ENCODE measurements at regions of chr7 and their contacts with region 1.

Region 1: GRCh38 chr7:44196450-44196872 is 4.3 kb upstream of the YKT6 start:
- DNase-seq: no peak
- H3K4me3 ChIP-seq: no peak overlapping the region
- H3K27ac ChIP-seq: no peak overlapping the region
- H3K4me1 ChIP-seq: peaks cover 1 to 5% (median 2%) of the 10 kb centered on the region in 4 donors
- H3K27me3 ChIP-seq: peaks cover 0 to 30% (median 0%) of the 10 kb centered on the region in 4 donors
- CTCF ChIP-seq: peak; percentile 52 to 66 (median 59)
- EP300 ChIP-seq: no peak
- POLR2A ChIP-seq: no peak

Region 2: DNA sequence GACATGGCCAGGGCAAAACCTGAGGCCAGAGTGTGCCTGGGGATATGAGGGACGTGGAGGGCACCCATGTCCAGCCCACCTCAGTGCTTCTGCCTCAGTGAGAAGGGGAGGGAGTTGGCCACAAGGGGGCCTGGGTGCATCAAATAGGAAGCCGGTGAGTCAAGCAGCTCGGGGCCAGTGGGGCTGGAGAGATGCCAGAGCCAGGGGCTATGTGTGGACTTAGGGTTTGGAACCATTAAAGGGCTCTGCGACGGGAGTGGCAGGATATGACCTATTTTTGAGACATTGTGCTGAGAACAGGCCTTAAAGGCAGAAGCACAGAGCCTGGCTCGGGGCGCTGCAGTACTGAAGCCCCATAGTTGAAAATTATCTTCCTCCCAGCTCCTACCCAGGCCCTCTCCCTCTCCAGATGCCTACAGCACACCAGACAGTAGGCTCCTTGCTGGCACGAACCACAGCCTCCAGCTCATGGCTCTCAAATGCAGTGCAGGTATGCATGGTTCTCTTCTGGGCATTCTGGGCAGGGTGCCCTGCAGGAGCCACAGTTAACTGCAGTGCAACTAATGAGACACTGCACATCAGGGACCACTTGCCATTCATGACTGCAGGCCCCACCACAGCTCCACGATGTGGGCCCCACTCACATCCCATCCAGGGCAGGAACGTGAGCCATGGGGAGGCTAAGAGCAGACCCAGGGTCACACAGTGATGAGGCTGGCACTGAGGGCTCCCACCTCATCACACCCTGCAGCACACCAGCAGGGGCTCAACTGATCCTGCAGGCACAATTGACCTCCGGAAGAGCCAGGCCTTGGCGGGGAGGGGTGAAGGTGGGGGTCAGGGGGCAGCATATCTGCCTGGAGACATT is 123.9 kb before region 1 on chr7:
- intact Hi-C with region 1: loop called (anchors 2 kb)
- DNase-seq: peak; percentile 96
- H3K4me3 ChIP-seq: peak overlapping the region in 1 of 4 donors; percentile 32
- H3K27ac ChIP-seq: peak overlapping the region; percentile 61 to 78 (median 72)
- H3K4me1 ChIP-seq: peaks cover 35 to 45% (median 36%) of the 10 kb centered on the region in 4 donors
- H3K27me3 ChIP-seq: no peaks in the 10 kb centered on the region
- CTCF ChIP-seq: peak; percentile 62 to 76 (median 72)
- EP300 ChIP-seq: no peak
- POLR2A ChIP-seq: no peak

Region 3: GRCh38 chr7:44131173-44132029 is 65.1 kb before region 1 on chr7:
- intact Hi-C with region 1: loop called (anchors 10 kb)
- DNase-seq: no peak
- H3K4me3 ChIP-seq: no peak overlapping the region
- H3K27ac ChIP-seq: no peak overlapping the region
- H3K4me1 ChIP-seq: peaks cover 0 to 21% (median 0%) of the 10 kb centered on the region in 4 donors
- H3K27me3 ChIP-seq: no peaks in the 10 kb centered on the region
- CTCF ChIP-seq: no peak
- EP300 ChIP-seq: no peak
- POLR2A ChIP-seq: no peak

Region 4: GRCh38 chr7:44223362-44224079 is 27.1 kb after region 1 on chr7:
- intact Hi-C with region 1: no loop called
- DNase-seq: no peak
- H3K4me3 ChIP-seq: no peak overlapping the region
- H3K27ac ChIP-seq: no peak overlapping the region
- H3K4me1 ChIP-seq: no peaks in the 10 kb centered on the region
- H3K27me3 ChIP-seq: peaks cover 0 to 58% (median 7%) of the 10 kb centered on the region in 4 donors
- CTCF ChIP-seq: no peak
- EP300 ChIP-seq: no peak
- POLR2A ChIP-seq: no peak

Region 5: DNA sequence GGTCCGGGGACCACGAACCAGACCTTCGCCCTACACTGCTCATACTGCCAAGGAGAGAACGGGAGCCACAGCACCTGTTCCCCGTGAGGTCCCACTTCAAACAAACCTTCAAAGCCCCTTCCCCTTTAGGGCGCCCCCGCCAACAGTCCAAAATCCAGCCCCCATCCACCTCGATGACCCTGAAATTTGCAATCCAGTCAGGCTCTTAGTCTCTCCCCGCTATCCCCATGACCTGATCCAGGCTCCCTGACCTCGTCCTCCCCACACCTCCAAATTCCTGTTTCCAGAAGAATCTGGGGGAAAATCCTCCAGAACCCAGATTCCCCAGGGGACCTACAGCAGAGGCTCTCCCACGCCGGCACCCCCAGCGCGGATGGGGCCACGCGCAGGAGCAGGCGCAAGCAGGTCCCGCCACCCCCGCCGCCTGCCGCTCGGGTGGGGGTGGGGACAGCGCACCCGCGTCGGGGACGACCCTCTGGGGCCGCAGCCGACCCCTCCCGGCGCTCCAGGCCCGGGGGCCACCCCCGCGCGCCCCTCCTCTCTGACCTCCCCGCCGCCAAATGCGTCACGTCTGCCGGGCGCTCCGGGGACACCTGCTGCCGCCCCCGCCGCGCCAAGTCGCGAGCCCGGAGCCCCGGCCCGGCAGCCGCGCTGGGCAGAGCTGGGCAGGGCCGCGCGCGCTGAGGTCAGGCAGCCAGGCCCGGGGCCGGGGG is 128.2 kb after region 1 on chr7:
- intact Hi-C with region 1: no loop called
- DNase-seq: peak; percentile 60
- H3K4me3 ChIP-seq: peak overlapping the region; percentile 38 to 57 (median 40)
- H3K27ac ChIP-seq: no peak overlapping the region
- H3K4me1 ChIP-seq: peaks cover 7 to 19% (median 12%) of the 10 kb centered on the region in 4 donors
- H3K27me3 ChIP-seq: peaks cover 0 to 47% (median 7%) of the 10 kb centered on the region in 4 donors
- CTCF ChIP-seq: no peak
- EP300 ChIP-seq: no peak
- POLR2A ChIP-seq: no peak